HEK293T (cell line): ENCODE measurements at regions of chr17 and their contacts with region 1.

Region 1: DNA sequence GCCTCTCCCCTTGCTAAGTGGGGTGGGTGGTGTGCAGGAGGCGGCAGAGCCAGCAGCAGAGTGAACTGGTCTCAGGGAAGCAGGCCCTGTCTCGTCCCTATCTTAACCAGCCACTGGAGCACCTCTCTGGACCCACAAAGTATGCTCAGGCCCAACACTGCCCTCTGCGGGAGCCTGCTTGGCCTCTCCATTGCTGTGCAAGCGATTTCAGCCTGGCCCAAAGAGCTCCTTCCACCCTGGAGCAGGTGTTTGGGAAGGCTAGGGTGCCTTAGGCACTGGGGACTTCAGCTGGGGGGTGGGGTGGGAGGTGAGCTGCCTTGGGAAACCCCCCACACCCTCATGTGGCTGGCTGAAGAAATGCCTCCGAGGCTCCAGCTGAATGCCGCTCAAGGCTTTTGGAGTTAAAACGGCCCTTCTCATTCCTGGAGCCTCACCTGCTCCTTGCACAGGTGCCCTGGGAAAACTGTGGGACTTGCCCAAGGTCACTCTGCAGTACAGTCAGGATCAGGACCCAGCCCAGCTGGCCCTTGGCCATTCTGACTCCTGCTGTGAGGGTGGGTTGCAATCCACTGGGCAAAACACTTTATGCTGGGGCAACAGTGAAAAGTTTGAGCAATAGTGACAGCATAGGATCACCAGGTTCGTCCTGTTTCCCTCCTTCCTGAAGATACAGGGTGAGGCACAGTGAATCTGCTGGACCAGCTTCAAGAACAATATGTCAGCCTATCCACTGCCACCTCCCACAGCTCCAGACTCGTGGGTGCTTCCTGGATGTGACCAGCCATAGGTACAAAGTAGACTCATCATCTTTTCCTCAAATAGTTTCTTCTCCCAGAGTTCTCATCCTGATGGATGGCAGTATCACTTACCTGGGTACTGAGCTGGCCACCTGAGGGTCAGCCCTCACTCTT is 5.9 kb upstream of the UBE2O start:
- DNase-seq: peak; percentile 46

Region 2: GRCh38 chr17:76408052-76408849 is 50.6 kb before region 1 on chr17:
- CTCF ChIA-PET with region 1: interaction called, 14 read pairs
- POLR2A ChIA-PET with region 1: interaction called, 8 read pairs
- DNase-seq: peak; percentile 67

Region 3: GRCh38 chr17:76506408-76507349 is 47.8 kb after region 1 on chr17:
- CTCF ChIA-PET with region 1: interaction called, 16 read pairs
- POLR2A ChIA-PET with region 1: interaction called, 4 read pairs
- DNase-seq: peak; percentile 91